ENCODE measurements at regions of chr4 and their contacts with region 1.

Region 1: DNA sequence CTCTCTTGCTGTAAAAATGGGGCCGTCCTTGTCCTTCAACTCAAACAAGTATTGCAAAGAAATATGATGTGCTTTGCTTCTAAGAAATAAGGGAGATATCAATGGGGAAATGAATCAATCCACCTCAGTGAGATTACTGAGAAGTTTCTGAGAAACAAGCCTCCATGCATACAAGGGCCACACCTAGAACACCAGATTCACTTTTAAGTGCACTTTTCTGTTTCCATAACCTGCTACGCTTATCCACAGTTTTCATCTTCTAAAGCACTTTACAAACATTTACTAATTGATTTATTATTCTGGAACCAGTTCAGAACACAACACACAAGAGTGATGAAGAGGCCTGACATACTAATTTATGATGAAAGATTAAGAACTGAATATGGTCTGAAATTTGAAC is 54.0 kb upstream of the BOD1L1 start:
- DNase-seq: no peak
- H3K4me3 ChIP-seq: no peak overlapping the region
- H3K4me3 Mint-ChIP-seq: no peak overlapping the region
- H3K27ac ChIP-seq: no peak overlapping the region
- H3K27ac Mint-ChIP-seq: no peak overlapping the region
- H3K4me1 ChIP-seq: no peaks in the 10 kb centered on the region
- H3K4me1 Mint-ChIP-seq: no peaks in the 10 kb centered on the region
- H3K27me3 ChIP-seq: no peaks in the 10 kb centered on the region
- H3K27me3 Mint-ChIP-seq: no peaks in the 10 kb centered on the region
- CTCF ChIP-seq: no peak

Region 2: DNA sequence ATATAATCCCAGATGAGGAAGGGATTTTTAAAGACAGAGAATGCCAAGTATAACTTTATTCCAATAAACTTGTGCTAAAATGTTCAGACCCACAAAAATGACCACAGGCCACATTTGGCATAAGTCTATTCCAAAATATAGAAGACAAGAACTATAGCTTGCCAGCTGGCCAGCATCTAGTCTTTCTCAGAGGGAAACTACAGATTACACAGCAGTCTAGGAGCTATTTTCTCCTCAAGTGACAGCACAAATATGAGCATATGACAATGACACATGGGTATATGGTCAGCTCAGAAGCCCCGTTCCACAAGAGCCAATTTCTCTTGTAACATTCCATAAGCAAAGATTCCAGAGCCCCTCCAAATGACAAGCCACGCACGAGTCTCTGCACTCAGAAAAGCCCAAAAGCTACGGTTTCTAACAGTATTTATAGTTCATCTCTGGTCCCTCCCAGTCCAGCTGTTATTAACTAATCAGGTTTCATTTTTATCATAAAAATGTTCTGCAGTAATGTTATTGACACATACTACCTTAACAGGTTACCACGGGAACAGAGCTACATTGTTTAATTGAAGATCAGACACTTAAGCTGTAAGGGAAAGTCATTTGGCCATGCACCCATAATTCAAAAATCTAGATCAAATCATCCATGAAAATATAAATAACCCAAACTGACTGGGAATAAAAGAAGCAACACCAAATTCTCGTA is 267.7 kb before region 1 on chr4:
- intact Hi-C with region 1: no loop called
- DNase-seq: no peak
- H3K4me3 ChIP-seq: no peak overlapping the region
- H3K4me3 Mint-ChIP-seq: no peak overlapping the region
- H3K27ac ChIP-seq: no peak overlapping the region
- H3K27ac Mint-ChIP-seq: no peak overlapping the region
- H3K4me1 ChIP-seq: peaks cover 4 to 10% of the 10 kb centered on the region in 2 donors
- H3K4me1 Mint-ChIP-seq: peaks cover 18% of the 10 kb centered on the region
- H3K27me3 ChIP-seq: no peaks in the 10 kb centered on the region
- H3K27me3 Mint-ChIP-seq: peaks cover 0 to 1% (median 0%) of the 10 kb centered on the region in 3 donors
- CTCF ChIP-seq: no peak

Region 3: GRCh38 chr4:13840502-13841190 is 159.1 kb after region 1 on chr4:
- intact Hi-C with region 1: loop called in 1 of 2 experiments (anchors 10 kb)
- DNase-seq: no peak
- H3K4me3 ChIP-seq: no peak overlapping the region
- H3K4me3 Mint-ChIP-seq: no peak overlapping the region
- H3K27ac ChIP-seq: no peak overlapping the region
- H3K27ac Mint-ChIP-seq: no peak overlapping the region
- H3K4me1 ChIP-seq: no peaks in the 10 kb centered on the region
- H3K4me1 Mint-ChIP-seq: no peaks in the 10 kb centered on the region
- H3K27me3 ChIP-seq: no peaks in the 10 kb centered on the region
- H3K27me3 Mint-ChIP-seq: peaks cover 0 to 7% (median 2%) of the 10 kb centered on the region in 3 donors
- CTCF ChIP-seq: no peak

Measured in CD14-positive monocyte (primary cell).